IMR-90 (cell line): ENCODE measurements at regions of chr2 and their contacts with region 1.

Region 1: GRCh38 chr2:143230506-143231253 is 101.5 kb downstream of the ARHGAP15 start:
- DNase-seq: no peak
- ATAC-seq: no peak
- H3K4me3 ChIP-seq: no peak overlapping the region
- H3K27ac ChIP-seq: no peak overlapping the region
- H3K4me1 ChIP-seq: no peaks in the 10 kb centered on the region
- H3K27me3 ChIP-seq: no peaks in the 10 kb centered on the region
- CTCF ChIP-seq: no peak
- POLR2A ChIP-seq: no peak
- RAD21 ChIP-seq: no peak

Region 2: DNA sequence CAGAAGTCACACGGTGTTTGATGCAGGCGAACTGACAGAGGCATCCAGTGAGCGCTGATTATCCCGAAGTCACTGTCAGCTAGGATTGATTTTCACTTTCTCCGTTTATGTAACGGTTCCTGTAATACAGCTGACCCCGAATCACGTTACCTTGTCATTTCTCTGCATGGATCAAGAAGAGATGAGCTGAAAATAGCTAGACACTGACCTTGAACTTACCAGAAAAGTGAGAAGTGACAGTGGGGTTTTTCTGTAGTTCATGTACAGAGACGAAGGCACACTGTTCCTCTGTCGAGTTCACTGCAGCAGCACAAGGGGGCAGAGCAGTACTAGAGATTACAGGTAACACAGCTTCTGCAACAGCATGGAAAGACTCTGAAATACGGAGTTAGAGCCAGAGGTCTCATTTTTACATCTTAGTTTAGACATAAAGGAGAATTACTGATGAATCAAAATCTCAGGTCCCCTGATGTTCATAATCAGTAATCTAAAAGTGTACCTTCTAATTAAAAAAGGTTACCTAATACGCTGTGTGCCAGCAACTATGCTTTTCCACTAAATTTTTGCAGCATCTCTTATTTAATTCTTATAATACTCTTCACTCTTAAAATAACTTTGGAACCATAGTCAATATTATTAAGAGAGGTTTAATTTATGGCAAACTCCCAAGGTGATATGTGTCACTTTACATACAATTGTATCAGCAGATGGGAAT is 68.4 kb before region 1 on chr2:
- CTCF ChIA-PET with region 1: no interaction called
- POLR2A ChIA-PET with region 1: interaction called, 12 read pairs
- dilution Hi-C with region 1: no loop called
- in situ Hi-C with region 1: no loop called
- intact Hi-C with region 1: no loop called
- DNase-seq: peak; percentile 58
- ATAC-seq: peak; percentile 86
- H3K4me3 ChIP-seq: no peak overlapping the region
- H3K27ac ChIP-seq: no peak overlapping the region
- H3K4me1 ChIP-seq: no peaks in the 10 kb centered on the region
- H3K27me3 ChIP-seq: peaks cover 15% of the 10 kb centered on the region
- CTCF ChIP-seq: peak; percentile 57
- POLR2A ChIP-seq: no peak
- RAD21 ChIP-seq: peak; percentile 62